Heart left ventricle (tissue), 16 donors: ENCODE measurements at regions of chr1 and their contacts with region 1.

Region 1: DNA sequence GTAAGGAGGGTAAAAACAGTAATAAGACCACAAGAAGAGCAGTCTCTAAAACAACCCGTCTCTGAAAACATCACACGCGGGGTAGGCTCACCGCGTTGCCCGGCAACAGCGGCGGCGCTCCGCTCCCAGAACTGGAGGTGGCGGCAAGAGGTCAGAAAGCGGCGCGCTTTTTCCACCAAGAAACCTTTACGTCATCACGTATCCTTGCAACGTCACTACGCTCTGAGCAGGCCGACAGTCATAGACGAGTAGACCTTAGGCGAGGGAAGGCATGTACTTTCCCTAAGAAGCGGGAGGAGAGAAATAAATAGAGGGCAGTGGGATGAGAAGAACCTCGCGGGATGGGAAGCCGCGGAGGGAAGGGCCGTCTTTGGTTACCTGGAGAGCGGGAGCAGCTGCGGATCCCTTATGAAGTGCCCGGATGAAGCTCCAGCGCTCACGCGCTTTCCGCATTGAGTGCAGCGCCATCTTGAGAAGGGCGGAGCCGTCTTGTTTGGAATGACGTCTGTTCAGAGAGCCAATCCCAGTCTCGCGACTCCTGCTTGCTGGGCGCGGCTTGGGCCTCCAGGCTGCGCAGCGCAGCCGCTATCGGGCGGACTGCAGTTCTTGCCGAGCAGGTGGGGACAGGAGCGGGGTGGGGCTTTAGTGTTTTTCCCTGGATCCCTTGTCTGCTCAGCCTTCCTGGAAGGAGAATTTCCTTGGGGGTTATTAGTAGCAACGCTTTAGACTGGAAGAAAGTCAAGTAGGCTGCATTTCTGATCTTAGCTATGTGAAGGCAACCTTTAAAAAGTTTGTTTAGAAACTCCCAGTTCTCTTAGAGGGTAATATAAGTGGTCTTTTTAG is at the start of gene WARS2:
- DNase-seq: peak; percentile 95 to 97 (median 96)
- ATAC-seq: peak; percentile 99
- H3K4me3 ChIP-seq: peak within 1 kb of the TSS; percentile 53 to 77 (median 65)
- H3K27ac ChIP-seq: peak within 1 kb of the TSS; percentile 94 to 99 (median 96)
- H3K4me1 ChIP-seq: peaks cover 0 to 41% (median 24%) of the 10 kb centered on the region in 12 donors
- H3K27me3 ChIP-seq: no peaks in the 10 kb centered on the region
- CTCF ChIP-seq: peak in 1 of 12 donors; percentile 6
- POLR2A ChIP-seq: peak in 1 of 2 donors; percentile 77
- total RNA-seq, gene WARS2: 8.5 to 15.5 (median 13.1) TPM

Region 2: DNA sequence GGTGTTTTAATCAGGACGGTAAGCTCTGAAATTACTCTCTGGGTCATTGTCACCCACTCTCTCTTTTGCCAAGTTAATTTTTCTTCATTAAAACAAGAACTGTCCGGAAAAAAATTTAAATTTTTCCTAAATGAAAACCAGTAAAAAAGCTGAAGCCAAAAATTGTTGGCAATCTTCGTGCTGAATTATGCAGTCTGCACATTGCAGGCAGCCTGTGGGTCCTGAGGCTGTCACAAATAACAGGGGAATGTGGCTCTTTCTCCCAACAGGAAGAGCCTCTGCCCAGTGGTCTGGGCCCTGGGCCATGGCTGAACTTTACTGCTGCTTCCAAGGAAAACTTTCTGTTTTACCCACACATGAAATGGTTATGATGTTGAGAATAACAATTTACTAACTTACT is 801.5 kb before region 1 on chr1:
- intact Hi-C with region 1: no loop called
- DNase-seq: no peak
- ATAC-seq: no peak
- H3K4me3 ChIP-seq: no peak overlapping the region
- H3K27ac ChIP-seq: no peak overlapping the region
- H3K4me1 ChIP-seq: no peaks in the 10 kb centered on the region
- H3K27me3 ChIP-seq: no peaks in the 10 kb centered on the region
- CTCF ChIP-seq: no peak
- POLR2A ChIP-seq: no peak

Region 3: DNA sequence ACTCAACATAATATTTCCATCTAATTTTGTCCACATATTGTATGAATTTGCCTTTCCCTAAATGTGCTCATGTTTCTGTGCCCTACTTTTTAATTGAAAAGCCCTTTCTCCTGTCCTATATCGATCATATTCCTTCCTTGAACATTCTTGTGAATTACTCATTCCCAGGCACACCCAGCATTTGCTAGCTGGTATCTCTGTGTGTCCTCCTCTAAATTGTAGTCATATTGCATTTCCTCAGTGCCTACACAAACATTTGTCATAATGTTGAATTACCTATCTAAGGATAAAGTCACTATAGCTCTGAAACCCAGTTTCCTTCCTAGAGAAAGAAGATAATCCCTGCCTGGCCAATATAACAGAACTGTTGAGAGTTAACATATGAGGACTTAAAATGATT is 112.6 kb before region 1 on chr1:
- intact Hi-C with region 1: no loop called
- DNase-seq: no peak
- ATAC-seq: no peak
- H3K4me3 ChIP-seq: no peak overlapping the region
- H3K27ac ChIP-seq: no peak overlapping the region
- H3K4me1 ChIP-seq: no peaks in the 10 kb centered on the region
- H3K27me3 ChIP-seq: no peaks in the 10 kb centered on the region
- CTCF ChIP-seq: no peak
- POLR2A ChIP-seq: no peak

Region 4: GRCh38 chr1:119046785-119047438 is 93.5 kb before region 1 on chr1:
- intact Hi-C with region 1: loop called in 1 of 10 experiments (anchors 10 kb)
- DNase-seq: no peak
- ATAC-seq: peak in 3 of 4 donors; percentile 53 to 69 (median 62)
- H3K4me3 ChIP-seq: peak overlapping the region in 5 of 12 donors; percentile 11 to 25 (median 15)
- H3K27ac ChIP-seq: peak overlapping the region in 11 of 12 donors; percentile 1 to 61 (median 35)
- H3K4me1 ChIP-seq: peaks cover 0 to 15% (median 0%) of the 10 kb centered on the region in 12 donors
- H3K27me3 ChIP-seq: no peaks in the 10 kb centered on the region
- CTCF ChIP-seq: no peak
- POLR2A ChIP-seq: no peak

Region 5: DNA sequence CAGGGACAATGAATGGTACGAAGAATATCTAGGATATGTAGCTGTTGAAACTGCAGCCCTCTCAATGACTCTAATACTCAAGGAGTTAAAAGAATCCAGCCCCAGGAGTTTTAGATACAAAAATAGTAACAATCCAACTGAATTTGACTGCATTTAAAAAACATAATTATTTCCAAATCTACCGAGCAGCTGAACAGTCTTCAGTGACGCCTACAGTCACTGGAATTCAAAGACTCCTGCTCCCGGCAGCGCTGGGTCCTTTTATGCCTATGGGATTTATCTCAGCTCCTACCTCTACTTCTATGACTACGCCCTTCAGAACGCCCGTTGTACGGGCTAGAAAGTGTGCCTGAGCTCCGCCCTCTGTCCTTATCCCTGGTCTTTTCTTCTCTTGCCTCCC is 55.6 kb before region 1 on chr1:
- intact Hi-C with region 1: loop called in 1 of 10 experiments (anchors 5 kb)
- DNase-seq: no peak
- ATAC-seq: peak in 3 of 4 donors; percentile 43 to 53 (median 44)
- H3K4me3 ChIP-seq: peak overlapping the region in 4 of 12 donors; percentile 14 to 37 (median 21)
- H3K27ac ChIP-seq: peak overlapping the region in 5 of 12 donors; percentile 12 to 60 (median 25)
- H3K4me1 ChIP-seq: peaks cover 0 to 28% (median 6%) of the 10 kb centered on the region in 12 donors
- H3K27me3 ChIP-seq: no peaks in the 10 kb centered on the region
- CTCF ChIP-seq: peak in 1 of 12 donors; percentile 12
- POLR2A ChIP-seq: no peak

Region 6: GRCh38 chr1:119091618-119092017 is 48.8 kb before region 1 on chr1:
- intact Hi-C with region 1: loop called in 2 of 10 experiments (anchors 5 kb)
- DNase-seq: no peak
- ATAC-seq: peak in 1 of 4 donors; percentile 16
- H3K4me3 ChIP-seq: no peak overlapping the region
- H3K27ac ChIP-seq: no peak overlapping the region
- H3K4me1 ChIP-seq: peaks cover 0 to 14% (median 2%) of the 10 kb centered on the region in 12 donors
- H3K27me3 ChIP-seq: no peaks in the 10 kb centered on the region
- CTCF ChIP-seq: no peak
- POLR2A ChIP-seq: no peak